ENCODE measurements at regions of chr4 and their contacts with region 1.

Region 1: DNA sequence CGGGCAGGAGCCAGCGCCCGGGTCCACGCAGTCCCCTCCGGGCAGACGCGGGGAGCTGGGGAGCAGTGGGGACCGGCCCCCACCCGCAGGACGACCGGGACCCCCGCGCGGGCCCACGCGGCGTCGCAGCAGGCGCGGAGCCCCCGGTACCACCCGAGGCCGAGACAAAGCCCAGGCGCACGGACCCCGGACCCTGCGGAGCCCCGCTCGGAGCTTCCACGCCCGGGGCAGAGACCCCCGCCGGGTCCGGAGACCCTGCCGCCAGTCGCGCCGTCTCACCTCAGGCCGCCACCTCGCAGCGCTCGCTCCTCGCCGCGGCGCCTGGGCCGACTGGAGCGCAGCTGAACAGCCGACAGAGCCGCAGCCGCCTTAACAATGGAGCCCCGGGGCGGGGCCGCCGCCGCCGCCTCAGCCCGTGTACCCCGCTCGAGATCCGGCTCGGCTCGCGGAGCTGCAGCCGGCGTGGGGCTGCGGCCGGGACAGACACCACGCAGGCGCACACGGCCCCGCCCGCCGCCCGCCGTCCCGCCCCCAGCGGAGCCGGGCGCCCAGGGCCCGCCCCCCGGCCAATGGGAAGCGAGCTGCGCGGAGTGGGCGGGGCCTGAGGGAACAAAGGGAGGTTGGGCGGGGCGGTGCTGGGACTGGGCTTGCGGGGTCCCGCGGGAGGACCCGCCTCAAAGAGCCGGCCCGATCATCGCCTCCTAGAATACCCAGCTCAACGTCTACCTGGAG is at the start of gene AFAP1:
- DNase-seq: peak; percentile 76
- ATAC-seq: peak; percentile 92
- H3K4me3 ChIP-seq: peak within 1 kb of the TSS; percentile 69
- H3K27ac ChIP-seq: peak within 1 kb of the TSS; percentile 95
- H3K4me1 ChIP-seq: peaks cover 12% of the 10 kb centered on the region
- H3K27me3 ChIP-seq: no peaks in the 10 kb centered on the region
- CTCF ChIP-seq: no peak
- POLR2A ChIP-seq: peak; percentile 90
- RAD21 ChIP-seq: peak; percentile 25; the same call in 1 of the 2 replicates
- total RNA-seq, gene AFAP1: 48.2 and 60.3 TPM in 2 replicates

Region 2: DNA sequence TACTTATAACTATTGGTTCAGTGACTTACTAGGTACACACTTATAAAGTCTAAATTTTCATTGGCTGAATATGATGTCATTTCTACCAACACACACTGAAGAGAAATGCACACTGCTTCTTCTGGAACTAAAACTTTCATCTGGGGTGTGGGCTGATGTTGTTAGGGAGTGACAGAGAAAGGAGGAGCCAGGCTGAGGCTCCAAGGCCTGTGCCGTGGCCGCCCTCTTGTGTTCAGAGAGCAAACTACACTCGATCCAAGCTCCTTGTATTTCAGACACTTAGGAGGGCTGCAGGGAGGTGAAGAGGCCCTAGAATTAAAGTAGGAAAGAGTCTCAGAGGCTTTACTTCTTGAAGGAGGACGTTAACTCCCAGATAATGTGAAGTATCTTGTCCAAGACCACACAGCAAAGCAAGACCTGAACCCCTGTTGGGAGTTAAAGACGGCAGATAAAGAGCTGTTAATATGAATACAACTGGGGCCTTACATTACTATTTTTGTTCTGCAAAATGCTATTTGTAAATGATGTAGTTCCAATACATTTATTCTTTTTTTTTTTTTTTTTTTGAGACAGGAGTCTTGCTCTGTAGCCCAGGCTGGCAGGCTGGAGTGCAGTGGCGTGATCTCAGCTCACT is 137.3 kb before region 1 on chr4:
- CTCF ChIA-PET with region 1: interaction called, 10 read pairs
- POLR2A ChIA-PET with region 1: no interaction called
- dilution Hi-C with region 1: no loop called
- in situ Hi-C with region 1: no loop called
- intact Hi-C with region 1: loop called (anchors 2 kb)
- DNase-seq: peak; percentile 85
- ATAC-seq: peak; percentile 84
- H3K4me3 ChIP-seq: no peak overlapping the region
- H3K27ac ChIP-seq: no peak overlapping the region
- H3K4me1 ChIP-seq: peaks cover 23% of the 10 kb centered on the region
- H3K27me3 ChIP-seq: no peaks in the 10 kb centered on the region
- CTCF ChIP-seq: peak; percentile 79
- POLR2A ChIP-seq: no peak
- RAD21 ChIP-seq: peak; percentile 67

Region 3: GRCh38 chr4:7861440-7861881 is 78.1 kb before region 1 on chr4:
- CTCF ChIA-PET with region 1: interaction called, 4 read pairs
- POLR2A ChIA-PET with region 1: no interaction called
- dilution Hi-C with region 1: no loop called
- in situ Hi-C with region 1: no loop called
- intact Hi-C with region 1: loop called (anchors 2 kb)
- DNase-seq: peak; percentile 97
- ATAC-seq: peak; percentile 68
- H3K4me3 ChIP-seq: no peak overlapping the region
- H3K27ac ChIP-seq: peak overlapping the region; percentile 95
- H3K4me1 ChIP-seq: peaks cover 38% of the 10 kb centered on the region
- H3K27me3 ChIP-seq: no peaks in the 10 kb centered on the region
- CTCF ChIP-seq: no peak
- POLR2A ChIP-seq: no peak
- RAD21 ChIP-seq: peak; percentile 26; the same call in 1 of the 2 replicates

Region 4: DNA sequence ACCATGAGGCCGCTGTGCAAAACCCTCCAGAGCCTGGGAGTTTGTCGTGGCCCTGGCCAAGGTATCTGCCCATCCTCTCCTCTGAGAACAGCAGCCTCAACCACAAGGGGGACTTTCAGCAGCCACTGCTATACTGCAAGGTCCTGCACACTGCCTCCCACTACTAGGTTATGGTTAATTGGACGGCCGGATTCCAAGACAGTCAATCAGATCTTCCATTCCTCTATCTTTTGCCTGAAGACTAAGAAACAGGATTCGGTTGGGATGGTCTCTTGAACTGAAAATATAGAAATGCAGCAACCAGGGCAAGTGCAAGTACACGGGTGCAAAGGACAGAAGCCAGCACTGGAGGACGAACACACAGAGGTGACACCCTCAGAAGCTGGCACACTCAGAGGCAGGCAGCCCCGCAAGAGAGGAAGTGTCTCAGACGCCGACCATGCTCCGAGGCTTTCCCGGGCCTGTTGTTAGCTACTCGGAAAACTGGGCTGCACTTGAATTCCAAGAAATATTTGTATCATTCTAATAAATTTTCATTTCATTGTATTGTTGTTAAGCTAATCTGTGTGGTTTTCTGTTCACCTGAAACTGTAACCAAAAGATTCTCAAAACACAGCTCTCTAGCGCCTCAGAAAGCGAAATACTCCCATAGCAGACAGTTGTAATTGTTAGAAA is 63.2 kb before region 1 on chr4:
- CTCF ChIA-PET with region 1: interaction called, 5 read pairs
- POLR2A ChIA-PET with region 1: no interaction called
- dilution Hi-C with region 1: no loop called
- in situ Hi-C with region 1: no loop called
- intact Hi-C with region 1: loop called (anchors 5 kb)
- DNase-seq: peak; percentile 73
- ATAC-seq: peak; percentile 60
- H3K4me3 ChIP-seq: no peak overlapping the region
- H3K27ac ChIP-seq: peak overlapping the region; percentile 47; the same call in 1 of the 2 replicates
- H3K4me1 ChIP-seq: peaks cover 44% of the 10 kb centered on the region
- H3K27me3 ChIP-seq: no peaks in the 10 kb centered on the region
- CTCF ChIP-seq: peak; percentile 45
- POLR2A ChIP-seq: no peak
- RAD21 ChIP-seq: peak; percentile 53

Region 5: GRCh38 chr4:7960790-7961655 is 21.5 kb after region 1 on chr4:
- CTCF ChIA-PET with region 1: interaction called, 6 read pairs
- POLR2A ChIA-PET with region 1: no interaction called
- dilution Hi-C with region 1: no loop called
- in situ Hi-C with region 1: no loop called
- intact Hi-C with region 1: loop called (anchors 2 kb)
- DNase-seq: peak; percentile 100
- ATAC-seq: peak; percentile 85
- H3K4me3 ChIP-seq: no peak overlapping the region
- H3K27ac ChIP-seq: peak overlapping the region; percentile 75
- H3K4me1 ChIP-seq: peaks cover 20% of the 10 kb centered on the region
- H3K27me3 ChIP-seq: peaks cover 2% of the 10 kb centered on the region; the same call in 1 of the 2 replicates
- CTCF ChIP-seq: 0 out of 2 replicates have a peak, but pooled peaks have one; percentile 0
- POLR2A ChIP-seq: no peak
- RAD21 ChIP-seq: no peak

Measured in IMR-90 (cell line).